ENCODE measurements at regions of chr15 and their contacts with region 1.

Region 1: GRCh38 chr15:75672646-75673425 is 25.1 kb downstream of the SNX33 start:
- DNase-seq: peak; percentile 91
- ATAC-seq: peak; percentile 69
- H3K4me3 ChIP-seq: no peak overlapping the region
- H3K27ac ChIP-seq: peak overlapping the region; percentile 78
- H3K4me1 ChIP-seq: peaks cover 34% of the 10 kb centered on the region
- H3K27me3 ChIP-seq: no peaks in the 10 kb centered on the region
- CTCF ChIP-seq: no peak
- POLR2A ChIP-seq: 0 out of 2 replicates have a peak, but pooled peaks have one; percentile 5
- RAD21 ChIP-seq: no peak

Region 2: GRCh38 chr15:75551081-75551480 is 121.8 kb before region 1 on chr15:
- CTCF ChIA-PET with region 1: no interaction called
- POLR2A ChIA-PET with region 1: no interaction called
- dilution Hi-C with region 1: no loop called
- in situ Hi-C with region 1: no loop called
- intact Hi-C with region 1: no loop called
- DNase-seq: no peak
- ATAC-seq: no peak
- H3K4me3 ChIP-seq: no peak overlapping the region
- H3K27ac ChIP-seq: no peak overlapping the region
- H3K4me1 ChIP-seq: no peaks in the 10 kb centered on the region
- H3K27me3 ChIP-seq: no peaks in the 10 kb centered on the region
- CTCF ChIP-seq: no peak
- POLR2A ChIP-seq: no peak
- RAD21 ChIP-seq: no peak

Region 3: GRCh38 chr15:75625542-75626347 is 47.1 kb before region 1 on chr15 and contains the start of gene SNUPN:
- CTCF ChIA-PET with region 1: no interaction called
- POLR2A ChIA-PET with region 1: no interaction called
- dilution Hi-C with region 1: no loop called
- in situ Hi-C with region 1: no loop called
- intact Hi-C with region 1: loop called (anchors 10 kb)
- DNase-seq: peak; percentile 86
- ATAC-seq: peak; percentile 92
- H3K4me3 ChIP-seq: peak within 1 kb of the TSS; percentile 79
- H3K27ac ChIP-seq: peak within 1 kb of the TSS; percentile 95
- H3K4me1 ChIP-seq: peaks cover 5% of the 10 kb centered on the region
- H3K27me3 ChIP-seq: no peaks in the 10 kb centered on the region
- CTCF ChIP-seq: no peak
- POLR2A ChIP-seq: peak; percentile 25; the same call in 1 of the 2 replicates
- RAD21 ChIP-seq: no peak
- total RNA-seq, gene SNUPN: 23.8 and 28.6 TPM in 2 replicates

Region 4: DNA sequence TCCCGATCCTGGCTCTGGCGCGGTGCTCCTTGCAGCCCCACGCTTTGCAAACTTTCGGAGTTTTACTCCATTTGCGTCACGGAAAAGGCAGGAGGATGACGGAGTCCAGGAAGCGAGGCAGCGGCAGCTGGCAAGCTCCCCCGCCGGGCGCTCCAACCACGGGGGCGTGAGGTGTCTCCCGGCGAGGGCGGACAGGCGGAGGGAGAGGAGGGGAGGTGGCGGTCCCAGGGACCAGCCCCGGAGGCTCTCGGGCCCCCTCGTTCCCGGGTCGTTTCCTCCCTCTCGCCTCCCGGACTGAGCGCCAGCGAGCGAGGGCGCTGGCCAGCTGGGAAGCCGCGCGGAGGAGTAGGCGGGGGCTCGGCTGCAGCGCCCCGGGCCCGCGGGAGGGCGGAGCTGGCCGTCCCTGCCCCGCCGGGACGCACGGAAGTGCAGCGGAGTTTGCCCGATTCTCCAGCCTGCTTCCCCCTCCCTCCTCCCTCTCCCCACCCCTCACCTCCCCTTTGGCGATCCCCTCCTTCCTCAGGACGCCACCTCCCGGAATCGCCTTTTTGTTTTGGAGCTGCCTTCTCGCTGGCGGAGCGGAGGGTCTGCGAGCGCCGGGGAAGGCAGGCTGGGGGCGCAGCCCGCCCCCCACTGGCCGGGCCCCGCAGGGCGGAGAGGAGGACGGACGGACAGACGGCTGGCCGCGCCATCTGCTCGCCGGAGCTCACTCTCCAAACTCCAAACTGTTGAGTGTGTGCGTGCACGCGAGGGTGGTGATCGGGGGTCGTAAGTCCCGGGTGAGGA is 25.3 kb before region 1 on chr15 and contains the start of gene SNX33:
- CTCF ChIA-PET with region 1: no interaction called
- POLR2A ChIA-PET with region 1: no interaction called
- dilution Hi-C with region 1: no loop called
- in situ Hi-C with region 1: no loop called
- intact Hi-C with region 1: loop called (anchors 1 kb)
- DNase-seq: peak; percentile 89
- ATAC-seq: peak; percentile 81
- H3K4me3 ChIP-seq: peak within 1 kb of the TSS; percentile 88
- H3K27ac ChIP-seq: peak within 1 kb of the TSS; percentile 94
- H3K4me1 ChIP-seq: peaks cover 37% of the 10 kb centered on the region
- H3K27me3 ChIP-seq: no peaks in the 10 kb centered on the region
- CTCF ChIP-seq: peak; percentile 49
- POLR2A ChIP-seq: peak; percentile 84
- RAD21 ChIP-seq: peak; percentile 24; the same call in 1 of the 2 replicates
- total RNA-seq, gene SNX33: 11.9 and 12.7 TPM in 2 replicates

Measured in IMR-90 (cell line).